ENCODE measurements at regions of chr1 and their contacts with region 1.

Region 1: GRCh38 chr1:8727809-8728213 is 89.6 kb downstream of the RERE start:
- DNase-seq: no peak
- H3K4me3 ChIP-seq: no peak overlapping the region
- H3K27ac ChIP-seq: no peak overlapping the region
- H3K4me1 ChIP-seq: peaks cover 0 to 16% (median 3%) of the 10 kb centered on the region in 4 experiments
- H3K27me3 ChIP-seq: no peaks in the 10 kb centered on the region

Region 2: DNA sequence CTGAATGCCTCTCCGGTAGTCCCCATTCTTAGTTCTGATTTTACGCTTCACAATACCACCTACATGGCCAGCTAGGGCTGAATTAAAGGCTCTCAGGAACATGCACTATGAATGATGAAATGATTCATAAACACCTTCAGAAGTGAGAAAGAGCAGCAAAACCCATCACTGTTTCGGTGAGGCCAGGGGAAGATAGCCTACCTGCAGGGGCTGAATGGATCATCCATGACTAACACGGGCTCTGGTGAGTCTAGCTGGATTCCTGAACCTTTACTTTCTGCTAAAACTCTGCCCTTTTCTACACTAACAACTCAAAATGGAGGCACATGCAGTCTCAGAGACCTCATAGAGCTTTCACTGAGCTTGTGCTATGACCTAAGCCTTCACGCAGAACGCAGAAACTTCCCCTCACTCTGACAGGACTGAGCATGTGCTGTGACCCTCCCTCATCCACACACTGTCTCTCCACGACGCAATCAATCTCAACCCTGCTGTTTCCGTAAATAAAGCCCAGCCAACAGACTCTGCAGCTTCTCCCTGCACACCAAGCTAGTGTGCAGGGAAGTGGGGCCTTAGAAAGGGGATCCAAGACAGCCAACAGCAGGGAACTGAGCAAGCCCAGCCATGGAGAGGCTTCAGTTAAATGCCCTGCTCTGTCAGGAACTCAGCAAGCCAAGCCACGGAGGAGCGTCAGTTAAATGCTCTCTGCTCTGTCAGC is 202.1 kb before region 1 on chr1:
- CTCF ChIA-PET with region 1: interaction called, 10 read pairs
- POLR2A ChIA-PET with region 1: no interaction called
- DNase-seq: peak; percentile 95 to 100 (median 99)
- H3K4me3 ChIP-seq: peak overlapping the region in 6 of 7 experiments; percentile 4 to 78 (median 56)
- H3K27ac ChIP-seq: peak overlapping the region; percentile 81 to 89
- H3K4me1 ChIP-seq: peaks cover 21 to 58% (median 39%) of the 10 kb centered on the region in 4 experiments
- H3K27me3 ChIP-seq: no peaks in the 10 kb centered on the region

Region 3: DNA sequence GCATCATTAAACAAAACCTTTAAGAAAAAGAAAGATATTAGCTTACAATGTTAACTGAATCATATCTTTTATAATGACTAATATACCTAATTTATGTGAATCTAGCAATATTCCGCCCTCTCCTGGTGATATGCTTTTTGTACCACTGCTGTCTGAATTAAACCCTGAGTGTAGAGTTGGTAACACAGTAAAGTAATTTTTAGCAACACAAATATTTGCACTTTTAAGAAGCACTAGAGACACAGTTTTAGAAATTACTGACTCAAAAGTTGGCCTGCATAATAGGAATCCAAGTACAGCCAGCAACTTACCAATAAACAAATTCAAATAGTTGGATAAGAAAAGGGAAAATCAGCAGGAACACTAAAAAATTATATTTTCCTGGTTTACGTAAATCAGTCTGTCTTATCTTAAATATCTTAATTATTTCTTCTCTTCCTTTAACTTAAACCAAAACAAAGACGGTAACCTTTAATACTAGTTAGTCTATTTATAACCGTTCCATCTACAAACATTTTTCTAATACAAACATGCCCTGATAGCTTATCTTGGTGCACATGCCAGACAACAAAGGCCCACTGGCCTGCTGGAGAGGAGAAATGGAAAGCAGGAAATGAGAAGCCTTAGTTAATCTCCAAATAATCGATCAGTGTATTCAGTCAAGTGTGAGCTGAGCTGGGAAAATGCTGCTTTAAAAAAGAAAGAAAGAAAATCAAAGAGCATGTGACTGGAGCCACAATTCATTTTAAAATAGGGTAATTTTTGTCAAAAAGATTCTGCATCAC is 156.4 kb before region 1 on chr1:
- CTCF ChIA-PET with region 1: interaction called, 145 read pairs
- POLR2A ChIA-PET with region 1: no interaction called
- DNase-seq: peak; percentile 55 to 75 (median 68)
- H3K4me3 ChIP-seq: peak overlapping the region in 1 of 7 experiments; percentile 30
- H3K27ac ChIP-seq: peak overlapping the region; percentile 30 to 70
- H3K4me1 ChIP-seq: peaks cover 0 to 18% (median 9%) of the 10 kb centered on the region in 4 experiments
- H3K27me3 ChIP-seq: no peaks in the 10 kb centered on the region

Region 4: DNA sequence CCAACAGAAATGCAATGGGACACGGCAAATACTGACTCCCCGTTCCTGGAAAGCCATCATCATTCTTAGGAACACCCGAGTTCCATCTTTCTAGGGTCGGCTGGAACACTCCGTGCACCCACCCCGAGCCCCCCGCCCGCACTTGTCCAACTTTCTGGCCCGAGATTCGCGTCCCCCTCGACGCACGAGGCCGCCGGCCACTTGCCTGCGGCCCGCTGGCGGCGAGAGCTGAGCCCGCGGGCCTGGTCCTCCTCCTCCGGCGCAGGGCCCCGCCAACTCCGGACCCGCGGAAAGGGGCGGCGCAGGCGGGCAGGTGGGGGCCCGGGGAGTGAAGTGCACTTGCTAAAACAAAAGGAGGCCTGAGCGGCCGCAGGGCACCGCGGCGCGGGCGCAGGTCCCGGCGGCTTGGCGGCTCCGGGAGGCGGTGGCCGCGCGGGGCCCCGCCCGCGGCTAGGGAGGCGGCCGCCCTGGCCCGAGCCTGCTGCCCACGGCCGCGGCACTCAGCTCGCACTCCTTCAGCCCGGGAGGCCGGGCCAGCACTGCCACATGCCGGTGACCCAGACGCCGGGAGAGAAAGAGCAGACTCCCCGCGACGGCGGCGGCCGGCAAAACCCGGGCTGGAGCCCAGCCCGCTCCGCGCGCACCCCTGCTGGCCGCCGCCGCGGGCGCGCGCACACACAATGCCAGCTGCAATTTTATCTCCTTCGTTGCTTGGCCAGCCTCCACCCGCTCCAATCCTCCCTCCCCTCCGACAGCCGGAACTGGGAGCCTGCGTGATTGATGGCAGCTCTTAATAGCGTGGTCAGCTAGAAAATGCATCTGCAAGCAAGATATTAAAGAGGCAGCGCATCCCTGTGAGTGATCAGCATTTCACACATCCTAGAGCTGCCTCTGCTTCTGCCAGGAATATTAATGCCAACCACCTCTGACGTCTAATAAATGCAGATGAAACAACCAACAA is 24.7 kb before region 1 on chr1:
- CTCF ChIA-PET with region 1: interaction called, 15 read pairs
- POLR2A ChIA-PET with region 1: interaction called, 3 read pairs
- DNase-seq: peak; percentile 76 to 87 (median 84)
- H3K4me3 ChIP-seq: peak overlapping the region; percentile 50 to 87 (median 74)
- H3K27ac ChIP-seq: peak overlapping the region; percentile 21 to 69
- H3K4me1 ChIP-seq: peaks cover 23 to 55% (median 40%) of the 10 kb centered on the region in 4 experiments
- H3K27me3 ChIP-seq: no peaks in the 10 kb centered on the region